ENCODE measurements at regions of chr5 and their contacts with region 1.

Region 1: GRCh38 chr5:141223112-141223783 is at the start of gene PCDHB14:
- DNase-seq: no peak
- ATAC-seq: peak in 1 of 2 donors; percentile 61
- total RNA-seq, gene PCDHB14: 3.9 to 5.8 TPM

Region 2: GRCh38 chr5:141570655-141571054 is 347.4 kb after region 1 on chr5:
- intact Hi-C with region 1: loop called in 1 of 2 experiments (anchors 10 kb)
- DNase-seq: no peak
- ATAC-seq: no peak

Measured in left cardiac atrium (tissue), 4 donors.